ENCODE measurements at regions of chr3 and their contacts with region 1.

Region 1: GRCh38 chr3:72739531-72740424 is 108.5 kb downstream of the SHQ1 start:
- DNase-seq: no peak
- H3K4me3 ChIP-seq: no peak overlapping the region
- H3K27ac ChIP-seq: no peak overlapping the region
- H3K4me1 ChIP-seq: peaks cover 0 to 13% (median 9%) of the 10 kb centered on the region in 4 donors
- H3K27me3 ChIP-seq: peaks cover 0 to 8% of the 10 kb centered on the region in 2 donors
- CTCF ChIP-seq: no peak

Region 2: DNA sequence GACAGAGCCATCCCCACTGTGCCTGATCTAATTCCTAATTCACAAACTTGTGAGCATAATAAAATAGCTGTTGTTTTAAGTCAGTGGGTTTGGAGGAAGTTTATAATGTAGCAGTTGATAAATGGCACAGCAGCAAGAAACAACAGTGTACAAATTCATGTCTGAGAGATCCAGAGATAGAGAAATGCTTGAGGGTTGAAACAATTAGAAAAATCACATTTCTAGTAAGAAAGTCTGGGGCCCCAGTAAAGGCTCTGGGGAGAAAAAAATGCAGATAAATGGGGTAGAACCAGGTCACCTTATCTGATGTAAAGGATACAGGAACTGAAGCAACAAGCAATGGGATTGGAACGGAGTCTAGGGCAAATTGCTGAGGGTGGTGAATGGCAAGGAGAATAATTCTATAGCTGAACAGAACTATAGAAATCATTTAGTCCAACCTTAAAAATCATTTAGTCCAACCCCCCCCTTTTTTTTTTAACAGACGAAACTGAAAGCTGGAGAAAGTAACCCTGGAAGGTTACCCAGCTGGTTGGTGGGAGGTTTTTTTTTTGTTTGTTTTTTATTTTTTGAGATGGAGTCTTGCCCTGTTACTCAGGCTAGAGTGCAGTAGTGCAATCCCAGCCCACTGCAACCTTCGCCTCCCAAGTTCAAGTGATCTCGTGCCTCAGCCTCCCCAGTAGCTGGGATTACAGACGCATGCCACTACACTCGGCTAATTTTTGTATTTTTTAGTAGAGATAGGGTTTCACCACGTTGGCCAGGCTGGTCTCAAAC is 122.7 kb after region 1 on chr3:
- intact Hi-C with region 1: no loop called
- DNase-seq: no peak
- H3K4me3 ChIP-seq: no peak overlapping the region
- H3K27ac ChIP-seq: no peak overlapping the region
- H3K4me1 ChIP-seq: no peaks in the 10 kb centered on the region
- H3K27me3 ChIP-seq: no peaks in the 10 kb centered on the region
- CTCF ChIP-seq: no peak

Region 3: GRCh38 chr3:74106925-74107324 is 1367.1 kb after region 1 on chr3:
- intact Hi-C with region 1: loop called (anchors 5 kb)
- DNase-seq: no peak
- H3K4me3 ChIP-seq: no peak overlapping the region
- H3K27ac ChIP-seq: no peak overlapping the region
- H3K4me1 ChIP-seq: no peaks in the 10 kb centered on the region
- H3K27me3 ChIP-seq: no peaks in the 10 kb centered on the region
- CTCF ChIP-seq: no peak

Measured in tibial artery (tissue), 4 donors.